ENCODE measurements at regions of chr20 and their contacts with region 1.

Region 1: GRCh38 chr20:44302026-44302669 is 8.9 kb downstream of the FITM2 start:
- DNase-seq: peak; percentile 96
- ATAC-seq: peak; percentile 97
- H3K4me3 ChIP-seq: peak overlapping the region; percentile 20 to 45 (median 40)
- H3K27ac ChIP-seq: peak overlapping the region; percentile 82
- H3K4me1 ChIP-seq: peaks cover 27% of the 10 kb centered on the region
- H3K27me3 ChIP-seq: no peaks in the 10 kb centered on the region
- CTCF ChIP-seq: no peak; the same call in 1 of the 2 replicates
- EP300 ChIP-seq: peak; percentile 75 to 84
- POLR2A ChIP-seq: peak in 1 of 2 experiments; percentile 81; a peak in 2 of 4 replicates
- RAD21 ChIP-seq: no peak

Region 2: GRCh38 chr20:44187051-44187762 is 114.9 kb before region 1 on chr20 and contains the start of gene JPH2:
- CTCF ChIA-PET with region 1: no interaction called
- POLR2A ChIA-PET with region 1: no interaction called
- in situ Hi-C with region 1: no loop called
- intact Hi-C with region 1: no loop called
- DNase-seq: no peak
- ATAC-seq: peak; percentile 34
- H3K4me3 ChIP-seq: peak within 1 kb of the TSS; percentile 6 to 63 (median 52)
- H3K27ac ChIP-seq: no peak within 1 kb of the TSS
- H3K4me1 ChIP-seq: peaks cover 29% of the 10 kb centered on the region
- H3K27me3 ChIP-seq: peaks cover 10 to 51% of the 10 kb centered on the region in 2 experiments; a peak in 4 of 5 replicates
- CTCF ChIP-seq: no peak
- EP300 ChIP-seq: no peak
- POLR2A ChIP-seq: no peak
- RAD21 ChIP-seq: no peak
- total RNA-seq, gene JPH2: not detected in 2 replicates

Region 3: GRCh38 chr20:44247586-44248409 is 54.4 kb before region 1 on chr20:
- CTCF ChIA-PET with region 1: no interaction called
- POLR2A ChIA-PET with region 1: no interaction called
- in situ Hi-C with region 1: no loop called
- intact Hi-C with region 1: loop called (anchors 2 kb)
- DNase-seq: peak; percentile 80
- ATAC-seq: peak; percentile 99
- H3K4me3 ChIP-seq: no peak overlapping the region
- H3K27ac ChIP-seq: no peak overlapping the region
- H3K4me1 ChIP-seq: no peaks in the 10 kb centered on the region
- H3K27me3 ChIP-seq: no peaks in the 10 kb centered on the region; a peak in 2 of 5 replicates
- CTCF ChIP-seq: peak; percentile 87
- EP300 ChIP-seq: peak in 1 of 2 experiments; percentile 64; a peak in 1 of 4 replicates
- POLR2A ChIP-seq: no peak
- RAD21 ChIP-seq: peak; percentile 95

Region 4: GRCh38 chr20:44287272-44288097 is 14.7 kb before region 1 on chr20:
- CTCF ChIA-PET with region 1: no interaction called
- POLR2A ChIA-PET with region 1: interaction called, 12 read pairs
- in situ Hi-C with region 1: no loop called
- intact Hi-C with region 1: no loop called
- DNase-seq: peak; percentile 66
- ATAC-seq: peak; percentile 65
- H3K4me3 ChIP-seq: no peak overlapping the region
- H3K27ac ChIP-seq: peak overlapping the region; percentile 25
- H3K4me1 ChIP-seq: peaks cover 30% of the 10 kb centered on the region
- H3K27me3 ChIP-seq: no peaks in the 10 kb centered on the region
- CTCF ChIP-seq: no peak
- EP300 ChIP-seq: 0 out of 4 replicates have a peak, but pooled peaks of 1 of the 2 experiments have one; percentile 18
- POLR2A ChIP-seq: no peak
- RAD21 ChIP-seq: no peak

Region 5: DNA sequence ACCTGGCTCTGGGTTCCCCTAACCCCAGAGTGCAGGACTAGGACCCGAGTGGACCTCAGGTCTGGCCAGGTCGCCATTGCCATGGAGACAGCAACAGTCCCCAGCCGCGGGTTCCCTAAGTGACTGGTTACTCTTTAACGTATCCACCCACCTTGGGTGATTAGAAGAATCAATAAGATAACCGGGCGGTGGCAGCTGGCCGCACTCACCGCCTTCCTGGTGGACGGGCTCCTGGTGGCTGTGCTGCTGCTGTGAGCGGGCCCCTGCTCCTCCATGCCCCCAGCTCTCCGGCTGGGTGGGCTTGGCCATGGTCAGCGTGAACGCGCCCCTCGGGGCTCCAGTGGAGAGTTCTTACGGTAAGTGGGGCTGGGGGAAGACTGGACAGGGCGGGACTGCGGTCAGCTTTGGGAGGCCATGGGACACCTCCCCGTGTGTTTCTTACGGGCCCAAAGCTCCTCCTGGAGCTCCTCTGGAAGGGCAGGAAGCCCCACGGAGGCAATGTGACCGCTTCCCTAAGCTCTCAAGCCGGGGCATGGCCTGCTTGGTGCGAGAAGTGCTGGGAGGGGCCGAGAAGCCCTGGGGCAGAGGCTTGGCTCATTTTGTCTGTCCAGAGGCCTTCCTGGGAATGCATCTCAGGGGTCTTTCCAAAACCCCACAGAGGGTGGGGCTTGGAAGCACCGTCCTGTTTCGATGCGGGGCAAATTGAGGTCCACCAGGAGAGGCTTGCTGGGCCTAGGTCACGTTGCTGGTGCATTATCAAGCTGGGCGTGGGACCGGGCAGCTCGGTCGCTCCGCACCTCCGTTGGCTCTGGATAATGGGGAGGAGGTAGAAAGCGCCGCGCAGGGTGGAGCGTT is 53.6 kb after region 1 on chr20 and contains the start of gene HNF4A:
- CTCF ChIA-PET with region 1: no interaction called
- POLR2A ChIA-PET with region 1: interaction called, 11 read pairs
- in situ Hi-C with region 1: no loop called
- intact Hi-C with region 1: no loop called
- DNase-seq: peak; percentile 92
- ATAC-seq: peak; percentile 91
- H3K4me3 ChIP-seq: peak within 1 kb of the TSS; percentile 69 to 95 (median 92)
- H3K27ac ChIP-seq: peak within 1 kb of the TSS; percentile 73
- H3K4me1 ChIP-seq: peaks cover 76% of the 10 kb centered on the region
- H3K27me3 ChIP-seq: no peaks in the 10 kb centered on the region; a peak in 1 of 5 replicates
- CTCF ChIP-seq: peak; percentile 9; the same call in 1 of the 2 replicates
- EP300 ChIP-seq: peak in 1 of 2 experiments; percentile 50; a peak in 1 of 4 replicates
- POLR2A ChIP-seq: peak; percentile 85 to 98
- RAD21 ChIP-seq: peak; percentile 66
- total RNA-seq, gene HNF4A: 169 and 190 TPM in 2 replicates

Region 6: DNA sequence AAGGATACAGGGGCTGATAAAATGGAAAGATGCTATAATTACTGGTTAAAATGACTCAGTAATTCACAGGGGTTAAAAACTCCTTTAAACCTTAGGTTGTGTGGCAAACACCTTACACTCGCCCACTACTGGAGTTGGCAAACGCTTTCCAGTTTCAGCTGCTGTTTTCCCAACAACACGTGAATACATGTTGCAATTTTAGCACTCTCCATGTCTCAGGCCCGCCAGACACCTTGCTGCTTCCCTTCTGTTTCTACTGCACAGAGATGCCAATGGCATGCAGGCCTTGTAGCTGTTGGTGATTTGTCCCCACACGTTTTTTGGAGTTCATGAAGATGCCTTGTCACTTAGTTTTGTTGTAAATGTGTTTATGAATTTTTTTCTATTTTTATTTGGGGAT is 168.2 kb after region 1 on chr20:
- CTCF ChIA-PET with region 1: no interaction called
- POLR2A ChIA-PET with region 1: no interaction called
- in situ Hi-C with region 1: no loop called
- intact Hi-C with region 1: no loop called
- DNase-seq: no peak
- ATAC-seq: no peak
- H3K4me3 ChIP-seq: no peak overlapping the region
- H3K27ac ChIP-seq: no peak overlapping the region
- H3K4me1 ChIP-seq: peaks cover 53% of the 10 kb centered on the region
- H3K27me3 ChIP-seq: no peaks in the 10 kb centered on the region; a peak in 1 of 5 replicates
- CTCF ChIP-seq: no peak
- EP300 ChIP-seq: no peak
- POLR2A ChIP-seq: no peak
- RAD21 ChIP-seq: no peak

Region 7: GRCh38 chr20:44504402-44505315 is 202.5 kb after region 1 on chr20:
- CTCF ChIA-PET with region 1: no interaction called
- POLR2A ChIA-PET with region 1: no interaction called
- in situ Hi-C with region 1: no loop called
- intact Hi-C with region 1: no loop called
- DNase-seq: peak; percentile 79
- ATAC-seq: peak; percentile 93
- H3K4me3 ChIP-seq: no peak overlapping the region
- H3K27ac ChIP-seq: peak overlapping the region; percentile 48
- H3K4me1 ChIP-seq: peaks cover 23% of the 10 kb centered on the region
- H3K27me3 ChIP-seq: no peaks in the 10 kb centered on the region
- CTCF ChIP-seq: no peak
- EP300 ChIP-seq: no peak
- POLR2A ChIP-seq: no peak
- RAD21 ChIP-seq: no peak

Measured in HepG2 (cell line).